Transverse colon (tissue), 4 donors: ENCODE measurements at regions of chr6 and their contacts with region 1.

Region 1: DNA sequence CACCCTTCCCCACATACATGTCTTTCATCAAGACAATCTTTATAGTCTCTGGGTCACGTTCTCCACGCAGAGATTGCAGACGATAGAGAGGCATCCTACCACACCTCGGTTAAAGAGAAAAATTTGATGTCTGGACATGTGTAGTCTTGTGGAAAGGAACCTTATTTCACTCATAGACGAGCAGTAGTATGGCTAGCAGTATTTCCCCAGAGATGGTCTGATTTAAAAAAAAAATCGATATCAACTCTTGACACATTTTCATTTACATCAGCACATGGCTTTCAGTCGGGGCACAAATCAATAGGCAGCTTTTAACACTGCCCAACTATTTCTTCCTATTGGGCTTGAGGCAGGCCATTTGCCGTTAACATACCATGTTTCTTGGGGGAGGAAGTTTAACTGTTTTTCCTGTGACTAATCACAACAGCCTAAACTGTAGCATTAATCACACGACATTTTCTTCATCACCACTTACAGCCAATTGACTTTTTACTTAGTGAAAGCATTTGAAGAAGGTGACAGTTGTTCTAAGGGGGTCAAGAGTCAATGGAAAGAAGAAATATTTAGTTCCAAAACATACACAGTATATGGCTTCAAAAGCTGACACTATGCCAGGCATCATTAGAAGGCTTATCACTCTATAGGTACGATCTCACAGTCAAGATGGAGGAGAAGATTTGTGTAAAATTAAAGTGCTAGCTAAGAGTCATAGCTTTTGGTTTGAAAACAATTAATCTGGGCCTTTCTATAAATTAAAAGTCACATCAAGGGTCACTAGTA is 129.5 kb upstream of the HDAC2 start:
- DNase-seq: no peak
- H3K4me3 ChIP-seq: no peak overlapping the region
- H3K27ac ChIP-seq: no peak overlapping the region
- H3K4me1 ChIP-seq: no peaks in the 10 kb centered on the region
- H3K27me3 ChIP-seq: no peaks in the 10 kb centered on the region
- CTCF ChIP-seq: no peak
- EP300 ChIP-seq: no peak
- POLR2A ChIP-seq: no peak

Region 2: GRCh38 chr6:114121913-114122645 is 21.7 kb after region 1 on chr6:
- in situ Hi-C with region 1: no loop called
- intact Hi-C with region 1: no loop called
- DNase-seq: no peak
- H3K4me3 ChIP-seq: no peak overlapping the region
- H3K27ac ChIP-seq: no peak overlapping the region
- H3K4me1 ChIP-seq: no peaks in the 10 kb centered on the region
- H3K27me3 ChIP-seq: no peaks in the 10 kb centered on the region
- CTCF ChIP-seq: no peak
- EP300 ChIP-seq: no peak
- POLR2A ChIP-seq: no peak

Region 3: DNA sequence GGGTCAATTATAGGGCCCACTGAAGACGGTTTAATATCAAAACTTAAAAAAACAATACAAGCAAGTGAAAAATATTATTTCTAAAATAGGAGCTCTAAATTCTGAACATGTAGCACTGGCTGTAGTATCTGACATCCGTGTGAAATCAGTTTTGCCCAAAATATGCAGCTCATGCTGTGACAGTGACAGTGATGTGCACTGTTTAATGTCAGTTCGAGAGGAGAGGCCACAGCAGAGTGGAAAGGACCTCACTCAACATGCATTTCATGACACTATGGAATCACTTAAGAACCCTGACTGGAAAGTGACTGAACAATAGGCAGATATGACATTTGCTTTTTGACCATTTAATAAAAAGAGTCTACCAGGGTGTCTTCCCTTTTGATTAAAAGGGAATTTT is 1563.3 kb after region 1 on chr6:
- in situ Hi-C with region 1: no loop called
- intact Hi-C with region 1: loop called (anchors 5 kb)
- DNase-seq: no peak
- H3K4me3 ChIP-seq: no peak overlapping the region
- H3K27ac ChIP-seq: no peak overlapping the region
- H3K4me1 ChIP-seq: no peaks in the 10 kb centered on the region
- H3K27me3 ChIP-seq: no peaks in the 10 kb centered on the region
- CTCF ChIP-seq: no peak
- EP300 ChIP-seq: no peak
- POLR2A ChIP-seq: no peak